ENCODE measurements at regions of chr5 and their contacts with region 1.

Region 1: DNA sequence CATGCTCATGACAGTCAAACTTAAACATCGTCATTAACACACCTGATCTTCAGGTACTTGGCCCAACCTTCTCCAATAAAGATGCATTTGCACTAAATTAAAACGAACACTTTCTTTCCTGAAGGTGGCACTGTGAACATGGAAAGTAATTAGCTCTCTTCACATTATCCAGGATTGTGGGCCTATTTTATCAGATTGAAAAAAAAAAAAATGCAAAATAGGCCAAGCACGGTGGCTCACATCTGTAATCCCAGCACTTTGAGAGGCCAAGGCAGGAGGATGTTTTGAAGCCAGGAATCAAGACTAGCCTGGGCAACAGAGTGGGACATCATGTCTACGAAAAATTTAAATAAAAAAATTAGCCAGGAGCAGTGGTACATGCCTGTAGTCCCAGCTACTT is 14.4 kb upstream of the CDC20B start:
- DNase-seq: no peak
- ATAC-seq: no peak
- H3K4me3 Mint-ChIP-seq: no peak overlapping the region
- H3K27ac Mint-ChIP-seq: no peak overlapping the region
- H3K4me1 Mint-ChIP-seq: no peaks in the 10 kb centered on the region
- H3K27me3 Mint-ChIP-seq: peaks cover 49% of the 10 kb centered on the region

Region 2: GRCh38 chr5:54946306-54946819 is 241.0 kb before region 1 on chr5:
- CTCF ChIA-PET with region 1: no interaction called
- POLR2A ChIA-PET with region 1: no interaction called
- intact Hi-C with region 1: no loop called
- DNase-seq: no peak
- ATAC-seq: no peak
- H3K4me3 Mint-ChIP-seq: no peak overlapping the region
- H3K27ac Mint-ChIP-seq: no peak overlapping the region
- H3K4me1 Mint-ChIP-seq: no peaks in the 10 kb centered on the region
- H3K27me3 Mint-ChIP-seq: peaks cover 2% of the 10 kb centered on the region

Region 3: GRCh38 chr5:55675119-55675518 is 487.7 kb after region 1 on chr5:
- CTCF ChIA-PET with region 1: no interaction called
- POLR2A ChIA-PET with region 1: no interaction called
- intact Hi-C with region 1: loop called in 1 of 2 experiments (anchors 10 kb)
- DNase-seq: no peak
- ATAC-seq: no peak
- H3K4me3 Mint-ChIP-seq: no peak overlapping the region
- H3K27ac Mint-ChIP-seq: no peak overlapping the region
- H3K4me1 Mint-ChIP-seq: no peaks in the 10 kb centered on the region
- H3K27me3 Mint-ChIP-seq: no peaks in the 10 kb centered on the region